Naive thymus-derived CD4-positive, alpha-beta T cell (primary cell): ENCODE measurements at regions of chr4 and their contacts with region 1.

Region 1: GRCh38 chr4:42519803-42520417 is 122.6 kb downstream of the SHISA3 start:
- DNase-seq: peak in 6 of 9 donors; percentile 24 to 50 (median 34)
- ATAC-seq: peak; percentile 57
- H3K4me3 ChIP-seq: no peak overlapping the region
- H3K4me3 Mint-ChIP-seq: no peak overlapping the region
- H3K27ac ChIP-seq: no peak overlapping the region
- H3K27ac Mint-ChIP-seq: peak overlapping the region in 1 of 9 donors; percentile 38
- H3K4me1 ChIP-seq: no peaks in the 10 kb centered on the region
- H3K4me1 Mint-ChIP-seq: peaks cover 0 to 4% (median 0%) of the 10 kb centered on the region in 7 donors
- H3K27me3 ChIP-seq: no peaks in the 10 kb centered on the region
- H3K27me3 Mint-ChIP-seq: no peaks in the 10 kb centered on the region

Region 2: GRCh38 chr4:41957634-41958033 is 562.3 kb before region 1 on chr4:
- CTCF ChIA-PET with region 1: interaction called, 4 read pairs
- POLR2A ChIA-PET with region 1: no interaction called
- intact Hi-C with region 1: loop called in 1 of 2 experiments (anchors 5 kb)
- DNase-seq: peak in 1 of 9 donors; percentile 28
- ATAC-seq: no peak
- H3K4me3 ChIP-seq: no peak overlapping the region
- H3K4me3 Mint-ChIP-seq: no peak overlapping the region
- H3K27ac ChIP-seq: no peak overlapping the region
- H3K27ac Mint-ChIP-seq: no peak overlapping the region
- H3K4me1 ChIP-seq: no peaks in the 10 kb centered on the region
- H3K4me1 Mint-ChIP-seq: peaks cover 0 to 3% (median 0%) of the 10 kb centered on the region in 7 donors
- H3K27me3 ChIP-seq: no peaks in the 10 kb centered on the region
- H3K27me3 Mint-ChIP-seq: no peaks in the 10 kb centered on the region

Region 3: DNA sequence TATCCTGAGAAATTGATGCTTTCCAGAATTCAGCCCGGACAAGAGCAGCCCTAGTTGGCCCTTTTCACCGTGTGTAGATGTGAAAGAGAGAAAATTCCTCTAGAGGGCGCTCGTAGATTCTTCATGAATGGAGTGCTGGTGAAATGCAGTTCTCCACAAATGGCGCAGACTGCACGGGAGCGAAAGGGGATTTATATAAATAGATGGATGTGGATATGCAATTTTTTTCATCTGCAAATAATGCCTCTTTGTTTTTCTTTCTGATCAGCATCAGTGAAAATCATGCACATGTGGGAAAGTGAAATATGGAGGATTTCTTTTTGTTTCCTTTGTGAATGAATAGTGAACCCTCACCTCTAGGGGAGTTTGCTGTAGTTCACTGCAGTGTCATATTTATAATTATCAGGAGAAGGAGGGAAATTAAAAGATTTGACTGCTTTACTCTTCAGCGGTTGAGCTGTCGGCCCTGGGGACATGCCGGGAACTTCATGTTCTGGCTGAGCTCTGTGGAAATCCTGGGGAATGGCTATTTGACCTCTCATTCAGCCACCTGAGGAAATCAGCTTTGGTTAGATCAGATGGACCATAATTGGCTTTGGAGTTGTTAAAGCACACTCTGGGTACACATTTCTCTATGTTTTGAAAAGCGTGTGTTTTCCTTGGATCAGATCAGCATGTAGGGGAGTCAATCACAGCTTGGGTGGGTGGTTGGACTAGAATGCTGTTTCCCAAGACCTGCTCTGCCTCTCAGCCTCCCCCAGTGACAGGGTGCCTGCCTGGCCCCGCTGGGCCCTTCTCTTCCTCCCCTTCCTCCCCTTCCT is 237.6 kb before region 1 on chr4:
- CTCF ChIA-PET with region 1: no interaction called
- POLR2A ChIA-PET with region 1: no interaction called
- intact Hi-C with region 1: loop called in 1 of 2 experiments (anchors 1 kb)
- DNase-seq: peak in 5 of 9 donors; percentile 9 to 30 (median 12)
- ATAC-seq: peak; percentile 65
- H3K4me3 ChIP-seq: no peak overlapping the region
- H3K4me3 Mint-ChIP-seq: peak overlapping the region in 2 of 10 donors; percentile 18 to 39
- H3K27ac ChIP-seq: no peak overlapping the region
- H3K27ac Mint-ChIP-seq: no peak overlapping the region
- H3K4me1 ChIP-seq: no peaks in the 10 kb centered on the region
- H3K4me1 Mint-ChIP-seq: peaks cover 0 to 14% (median 7%) of the 10 kb centered on the region in 7 donors
- H3K27me3 ChIP-seq: no peaks in the 10 kb centered on the region
- H3K27me3 Mint-ChIP-seq: peaks cover 6 to 29% (median 22%) of the 10 kb centered on the region in 5 donors

Region 4: GRCh38 chr4:42371306-42372252 is 148.3 kb before region 1 on chr4:
- CTCF ChIA-PET with region 1: interaction called, 3 read pairs
- POLR2A ChIA-PET with region 1: no interaction called
- intact Hi-C with region 1: loop called (anchors 1 kb)
- DNase-seq: peak in 2 of 9 donors; percentile 3 to 4
- ATAC-seq: no peak
- H3K4me3 ChIP-seq: no peak overlapping the region
- H3K4me3 Mint-ChIP-seq: no peak overlapping the region
- H3K27ac ChIP-seq: no peak overlapping the region
- H3K27ac Mint-ChIP-seq: no peak overlapping the region
- H3K4me1 ChIP-seq: no peaks in the 10 kb centered on the region
- H3K4me1 Mint-ChIP-seq: no peaks in the 10 kb centered on the region
- H3K27me3 ChIP-seq: no peaks in the 10 kb centered on the region
- H3K27me3 Mint-ChIP-seq: peaks cover 7 to 30% (median 22%) of the 10 kb centered on the region in 5 donors

Region 5: GRCh38 chr4:42488114-42488513 is 31.8 kb before region 1 on chr4:
- CTCF ChIA-PET with region 1: no interaction called
- POLR2A ChIA-PET with region 1: no interaction called
- intact Hi-C with region 1: no loop called
- DNase-seq: no peak
- ATAC-seq: no peak
- H3K4me3 ChIP-seq: no peak overlapping the region
- H3K4me3 Mint-ChIP-seq: no peak overlapping the region
- H3K27ac ChIP-seq: no peak overlapping the region
- H3K27ac Mint-ChIP-seq: no peak overlapping the region
- H3K4me1 ChIP-seq: no peaks in the 10 kb centered on the region
- H3K4me1 Mint-ChIP-seq: peaks cover 0 to 12% (median 6%) of the 10 kb centered on the region in 7 donors
- H3K27me3 ChIP-seq: no peaks in the 10 kb centered on the region
- H3K27me3 Mint-ChIP-seq: no peaks in the 10 kb centered on the region